BJ (cell line): ENCODE measurements at regions of chr12 and their contacts with region 1.

Region 1: DNA sequence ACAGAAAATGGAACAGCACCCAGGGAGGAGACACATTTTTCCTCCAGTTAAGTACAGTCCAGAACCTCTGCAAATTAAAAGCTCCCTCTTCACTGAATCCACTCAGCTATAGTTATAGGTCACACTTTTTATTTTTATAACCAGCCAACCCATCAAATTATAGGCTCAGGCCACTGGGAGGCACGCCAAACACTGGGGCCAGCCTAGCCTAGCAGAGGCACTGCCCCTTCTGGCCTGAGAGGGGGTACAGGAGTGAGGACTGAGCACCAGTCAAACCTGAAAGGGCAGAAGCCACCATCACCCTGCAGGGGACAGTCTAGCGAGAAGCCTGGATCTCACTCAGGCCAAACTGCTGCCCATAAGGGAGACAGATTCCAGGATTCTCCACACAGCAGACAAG is 19.3 kb downstream of the FMNL3 start:
- DNase-seq: no peak
- H3K4me3 ChIP-seq: no peak overlapping the region
- H3K27me3 ChIP-seq: no peaks in the 10 kb centered on the region
- CTCF ChIP-seq: no peak

Region 2: GRCh38 chr12:49828133-49829091 is 140.5 kb after region 1 on chr12 and contains the start of gene NCKAP5L:
- CTCF ChIA-PET with region 1: no interaction called
- POLR2A ChIA-PET with region 1: interaction called, 16 read pairs
- DNase-seq: peak; percentile 74
- H3K4me3 ChIP-seq: peak within 1 kb of the TSS; percentile 92
- H3K27me3 ChIP-seq: no peaks in the 10 kb centered on the region
- CTCF ChIP-seq: no peak
- polyA plus RNA-seq, gene NCKAP5L: 7.3 and 13.2 TPM in 2 replicates